Colonic mucosa (tissue), 4 donors: ENCODE measurements at regions of chrX and their contacts with region 1.

Region 1: DNA sequence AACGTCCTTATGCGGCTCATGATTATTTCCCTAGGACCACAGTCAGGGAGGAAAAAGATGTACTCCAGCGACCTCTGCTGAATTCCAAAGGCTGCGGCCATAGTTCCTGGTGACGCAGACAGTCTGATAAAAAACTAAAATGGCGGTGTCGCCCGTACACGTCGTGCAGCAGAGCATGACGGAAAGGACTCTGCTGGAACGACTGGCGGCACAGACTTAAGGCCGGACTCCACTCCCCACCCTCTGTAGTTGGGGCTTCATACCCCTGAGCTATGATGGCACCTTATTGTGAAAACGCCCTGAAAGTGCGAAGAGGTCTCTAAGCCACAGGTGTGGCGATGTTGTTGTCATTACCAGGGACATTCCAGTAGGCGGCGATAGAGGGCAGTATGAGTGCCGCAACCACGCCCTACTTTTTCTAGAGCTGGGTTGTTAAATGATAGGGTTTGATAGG is 90.0 kb upstream of the EDA2R start:
- DNase-seq: peak; percentile 62
- H3K4me3 ChIP-seq: peak overlapping the region; percentile 31
- H3K27ac ChIP-seq: peak overlapping the region; percentile 6
- H3K4me1 ChIP-seq: no peaks in the 10 kb centered on the region
- H3K27me3 ChIP-seq: no peaks in the 10 kb centered on the region
- CTCF ChIP-seq: peak; percentile 67

Region 2: GRCh38 chrX:65575022-65575421 is 1153.8 kb before region 1 on chrX:
- intact Hi-C with region 1: loop called (anchors 10 kb)
- DNase-seq: no peak
- H3K4me3 ChIP-seq: no peak overlapping the region
- H3K27ac ChIP-seq: no peak overlapping the region
- H3K4me1 ChIP-seq: no peaks in the 10 kb centered on the region
- H3K27me3 ChIP-seq: no peaks in the 10 kb centered on the region
- CTCF ChIP-seq: no peak